Common myeloid progenitor, CD34-positive (primary cell): ENCODE measurements at regions of chr22 and their contacts with region 1.

Region 1: DNA sequence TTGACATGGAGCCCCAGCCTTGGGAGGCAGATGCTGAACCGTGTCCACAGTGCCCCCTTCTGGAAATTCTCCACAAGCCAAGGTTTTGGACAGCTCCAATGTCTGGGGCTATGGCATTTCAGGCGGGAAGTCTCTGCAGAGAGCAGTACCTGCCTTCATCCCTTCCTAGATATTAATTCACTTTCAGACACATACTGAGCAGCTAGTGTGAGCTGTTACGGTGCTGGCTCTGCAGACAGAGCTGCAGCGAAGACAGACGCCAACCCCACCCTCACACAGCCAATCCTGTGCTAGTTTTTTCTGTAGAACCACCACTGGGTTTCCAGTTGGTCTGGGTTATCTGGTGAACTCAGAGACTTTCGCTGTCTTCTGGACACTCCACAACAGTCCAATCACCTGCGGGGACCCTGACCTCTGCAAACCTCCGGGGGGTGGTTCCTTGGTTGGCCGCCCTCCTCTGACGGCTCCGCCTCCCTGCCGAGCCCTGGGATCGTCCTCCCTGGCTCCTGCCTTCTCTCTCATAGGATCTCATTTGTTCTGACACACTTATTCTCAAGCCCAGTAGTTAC is 9.1 kb downstream of the LMF2 start:
- DNase-seq: peak; percentile 59 to 80 (median 69)
- H3K4me3 ChIP-seq: no peak overlapping the region
- H3K27ac ChIP-seq: no peak overlapping the region
- H3K4me1 ChIP-seq: peaks cover 0 to 9% (median 2%) of the 10 kb centered on the region in 4 experiments
- H3K27me3 ChIP-seq: no peaks in the 10 kb centered on the region

Region 2: GRCh38 chr22:50185384-50186087 is 312.9 kb before region 1 on chr22 and contains the start of gene TRABD:
- CTCF ChIA-PET with region 1: no interaction called
- POLR2A ChIA-PET with region 1: no interaction called
- DNase-seq: peak; percentile 85 to 92 (median 92)
- H3K4me3 ChIP-seq: peak within 1 kb of the TSS; percentile 35 to 73 (median 65)
- H3K27ac ChIP-seq: peak within 1 kb of the TSS in 1 of 2 experiments; percentile 71
- H3K4me1 ChIP-seq: peaks cover 0 to 62% (median 56%) of the 10 kb centered on the region in 4 experiments
- H3K27me3 ChIP-seq: peaks cover 0 to 6% (median 0%) of the 10 kb centered on the region in 5 experiments

Region 3: DNA sequence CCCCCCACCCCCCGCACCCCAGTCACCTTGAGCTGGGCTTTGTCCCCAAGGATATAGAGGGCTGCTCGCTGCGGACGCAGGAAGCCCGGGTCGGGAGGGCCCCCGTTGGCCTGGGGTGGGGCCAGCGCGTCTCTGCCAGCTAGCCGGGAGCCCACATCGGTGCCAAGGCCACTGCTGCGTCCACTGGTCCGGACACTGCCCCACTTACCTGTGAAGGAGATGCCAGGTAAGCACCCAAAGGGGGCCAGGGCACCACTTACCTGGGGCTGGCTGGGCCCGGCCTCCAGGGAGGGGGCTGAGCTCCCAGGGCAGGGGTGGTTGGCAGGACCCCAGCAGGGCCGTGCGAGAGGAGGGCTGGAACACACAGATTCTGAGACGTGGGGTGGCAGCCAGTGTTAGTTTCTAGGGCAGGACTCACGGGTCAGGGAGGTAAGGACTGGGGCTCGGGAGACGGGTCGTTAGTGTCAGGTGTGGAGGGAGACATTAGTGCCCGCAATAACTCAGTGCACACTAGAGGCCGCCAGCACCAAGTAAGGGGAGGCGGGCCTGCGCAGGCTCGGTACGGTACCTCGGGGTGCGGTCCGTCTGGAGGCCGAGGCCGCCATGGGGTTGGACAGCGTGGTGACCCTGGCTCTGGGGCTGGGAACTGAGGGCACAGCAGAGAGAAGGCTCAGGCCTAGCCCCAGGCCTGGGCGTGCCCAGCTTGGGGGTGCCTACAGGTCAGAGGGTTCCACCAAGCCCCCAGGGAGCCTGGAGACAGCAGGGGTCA is 41.8 kb before region 1 on chr22:
- CTCF ChIA-PET with region 1: interaction called, 63 read pairs
- POLR2A ChIA-PET with region 1: no interaction called
- DNase-seq: peak in 1 of 3 donors; percentile 15
- H3K4me3 ChIP-seq: no peak overlapping the region
- H3K27ac ChIP-seq: no peak overlapping the region
- H3K4me1 ChIP-seq: no peaks in the 10 kb centered on the region
- H3K27me3 ChIP-seq: no peaks in the 10 kb centered on the region

Region 4: GRCh38 chr22:50473855-50474667 is 24.3 kb before region 1 on chr22:
- CTCF ChIA-PET with region 1: interaction called, 13 read pairs
- POLR2A ChIA-PET with region 1: interaction called, 4 read pairs
- DNase-seq: no peak
- H3K4me3 ChIP-seq: peak overlapping the region; percentile 46 to 76 (median 72)
- H3K27ac ChIP-seq: peak overlapping the region in 1 of 2 experiments; percentile 34
- H3K4me1 ChIP-seq: peaks cover 4 to 59% (median 57%) of the 10 kb centered on the region in 4 experiments
- H3K27me3 ChIP-seq: peaks cover 0 to 6% (median 0%) of the 10 kb centered on the region in 5 experiments

Region 5: GRCh38 chr22:50485201-50486131 is 12.9 kb before region 1 on chr22:
- CTCF ChIA-PET with region 1: interaction called, 20 read pairs
- POLR2A ChIA-PET with region 1: no interaction called
- DNase-seq: no peak
- H3K4me3 ChIP-seq: no peak overlapping the region
- H3K27ac ChIP-seq: no peak overlapping the region
- H3K4me1 ChIP-seq: peaks cover 0 to 23% (median 18%) of the 10 kb centered on the region in 4 experiments
- H3K27me3 ChIP-seq: peaks cover 0 to 32% (median 14%) of the 10 kb centered on the region in 5 experiments

Region 6: GRCh38 chr22:50531962-50532674 is 33.7 kb after region 1 on chr22:
- CTCF ChIA-PET with region 1: no interaction called
- POLR2A ChIA-PET with region 1: no interaction called
- DNase-seq: no peak
- H3K4me3 ChIP-seq: peak overlapping the region; percentile 37 to 86 (median 66)
- H3K27ac ChIP-seq: no peak overlapping the region
- H3K4me1 ChIP-seq: peaks cover 0 to 60% (median 48%) of the 10 kb centered on the region in 4 experiments
- H3K27me3 ChIP-seq: peaks cover 0 to 41% (median 3%) of the 10 kb centered on the region in 5 experiments